ENCODE measurements at regions of chr7 and their contacts with region 1.

Region 1: GRCh38 chr7:6228361-6229229 is 43.8 kb downstream of the CYTH3 start:
- DNase-seq: no peak
- ATAC-seq: no peak
- H3K4me3 ChIP-seq: no peak overlapping the region
- H3K27ac ChIP-seq: no peak overlapping the region
- H3K4me1 ChIP-seq: no peaks in the 10 kb centered on the region
- H3K27me3 ChIP-seq: peaks cover 2 to 29% of the 10 kb centered on the region in 2 experiments; a peak in 4 of 5 replicates
- CTCF ChIP-seq: no peak
- EP300 ChIP-seq: no peak
- POLR2A ChIP-seq: no peak
- RAD21 ChIP-seq: no peak

Region 2: DNA sequence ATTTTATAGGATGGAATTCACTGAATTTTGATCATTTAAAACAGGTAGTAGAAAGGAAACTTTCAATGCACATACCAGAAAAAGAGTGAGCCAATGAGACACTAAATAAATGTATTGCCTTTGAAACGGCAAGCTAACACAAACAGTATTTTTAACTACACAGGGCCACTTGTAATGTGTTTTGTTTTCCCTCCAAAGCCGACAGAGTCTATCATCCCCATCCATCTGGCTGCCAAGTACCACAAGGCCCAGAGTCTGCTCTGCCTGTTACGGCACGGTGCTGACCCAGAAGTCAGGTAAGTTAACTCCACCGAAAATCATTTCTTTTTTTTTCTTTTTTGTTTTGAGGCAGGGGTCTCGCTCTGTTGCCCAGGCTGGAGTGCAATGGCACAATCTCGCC is 196.0 kb before region 1 on chr7:
- CTCF ChIA-PET with region 1: no interaction called
- POLR2A ChIA-PET with region 1: no interaction called
- in situ Hi-C with region 1: no loop called
- intact Hi-C with region 1: no loop called
- DNase-seq: no peak
- ATAC-seq: no peak
- H3K4me3 ChIP-seq: no peak overlapping the region
- H3K27ac ChIP-seq: no peak overlapping the region
- H3K4me1 ChIP-seq: no peaks in the 10 kb centered on the region
- H3K27me3 ChIP-seq: no peaks in the 10 kb centered on the region
- CTCF ChIP-seq: no peak
- EP300 ChIP-seq: no peak
- POLR2A ChIP-seq: no peak
- RAD21 ChIP-seq: no peak

Region 3: GRCh38 chr7:6175645-6176044 is 53.0 kb before region 1 on chr7:
- CTCF ChIA-PET with region 1: no interaction called
- POLR2A ChIA-PET with region 1: no interaction called
- in situ Hi-C with region 1: no loop called
- intact Hi-C with region 1: loop called (anchors 1 kb)
- DNase-seq: no peak
- ATAC-seq: no peak
- H3K4me3 ChIP-seq: no peak overlapping the region
- H3K27ac ChIP-seq: no peak overlapping the region
- H3K4me1 ChIP-seq: no peaks in the 10 kb centered on the region
- H3K27me3 ChIP-seq: no peaks in the 10 kb centered on the region
- CTCF ChIP-seq: no peak
- EP300 ChIP-seq: no peak
- POLR2A ChIP-seq: no peak
- RAD21 ChIP-seq: no peak

Measured in HepG2 (cell line).